ENCODE measurements at regions of chr5 and their contacts with region 1.

Region 1: DNA sequence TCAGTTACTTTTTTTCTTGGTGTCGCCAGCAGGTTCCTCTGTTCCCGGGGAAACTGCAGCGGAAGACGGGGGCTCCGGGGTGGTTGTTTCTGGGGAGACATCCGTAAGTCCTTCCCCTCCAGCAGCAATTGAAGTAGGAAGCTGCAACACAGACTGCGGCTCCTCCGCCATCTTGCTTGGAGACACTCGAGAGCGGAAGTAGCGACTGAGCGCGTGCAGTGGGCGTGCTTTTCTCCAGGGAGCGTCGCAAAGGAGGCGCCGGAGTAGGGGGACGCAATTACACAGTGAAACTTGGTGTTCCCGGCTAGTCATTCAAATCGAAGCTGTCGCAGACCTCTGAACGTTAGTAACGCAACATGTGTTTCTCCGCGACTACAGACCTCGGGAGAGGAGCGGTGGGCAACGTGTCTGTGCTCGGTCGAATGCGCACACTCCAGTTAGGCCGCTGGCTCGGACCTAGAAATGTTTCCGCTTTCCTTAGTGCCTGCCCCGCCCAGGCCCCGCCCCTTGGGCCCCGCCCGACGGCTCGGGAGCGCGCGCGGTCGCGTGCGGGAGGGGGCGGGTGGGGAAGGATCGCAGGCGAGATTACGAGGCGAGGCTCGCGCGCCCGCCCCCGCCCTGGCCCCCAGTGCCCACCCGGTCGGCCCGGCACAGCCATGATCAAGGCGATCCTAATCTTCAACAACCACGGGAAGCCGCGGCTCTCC is at the starts of genes AP3S1 and ATG12:
- DNase-seq: peak; percentile 95
- ATAC-seq: peak; percentile 97
- total RNA-seq, gene AP3S1: 61.9 TPM
- total RNA-seq, gene ATG12: 23.5 TPM

Region 2: DNA sequence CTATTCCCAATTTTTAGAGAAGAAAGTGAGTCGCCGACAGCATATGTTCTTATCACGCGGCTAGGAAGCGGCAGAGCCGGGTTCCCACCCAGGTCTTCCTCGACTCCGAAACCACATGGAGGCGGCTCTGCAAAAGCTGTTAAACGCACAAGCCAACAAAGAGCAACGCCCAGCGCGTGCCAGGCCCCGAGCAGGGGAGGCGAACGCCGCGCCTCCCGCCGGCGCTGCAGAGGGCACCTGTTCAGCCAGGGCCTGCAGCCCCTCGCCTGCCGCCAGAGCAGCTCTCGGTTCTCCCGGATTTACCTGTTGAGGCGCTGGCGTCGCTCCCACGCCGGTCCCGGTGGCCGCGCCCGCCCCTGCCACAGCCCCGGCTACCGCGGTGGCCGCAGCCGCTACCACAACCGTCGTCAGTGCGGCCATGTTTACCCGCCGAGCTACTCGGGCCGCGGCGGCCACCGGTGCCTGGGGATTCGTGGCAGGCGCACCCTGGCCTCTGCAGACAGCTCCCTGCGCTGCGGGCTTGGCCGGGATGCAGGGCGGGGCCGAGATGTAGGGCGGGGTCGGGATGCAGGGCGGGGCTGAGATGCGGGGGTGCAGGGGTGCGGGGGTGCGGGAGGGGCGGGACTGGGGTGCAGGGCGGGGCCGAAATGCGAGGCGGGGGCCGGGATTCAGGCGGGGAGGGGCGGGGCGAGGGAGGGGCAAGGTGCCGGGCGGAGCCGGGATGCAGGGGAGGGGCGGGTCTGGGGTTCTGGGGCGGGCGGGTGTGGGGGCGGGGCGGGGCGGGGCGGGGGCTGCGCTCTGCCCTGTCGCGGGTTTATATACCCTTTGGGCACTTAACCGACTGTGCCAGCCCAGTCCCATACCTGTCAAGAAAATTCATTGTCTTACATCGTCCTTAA is 545.2 kb before region 1 on chr5 and contains the start of gene CCDC112:
- intact Hi-C with region 1: loop called (anchors 10 kb)
- DNase-seq: peak; percentile 93
- ATAC-seq: peak; percentile 94
- total RNA-seq, gene CCDC112: 5.1 TPM

Region 3: GRCh38 chr5:115625579-115626444 is 215.7 kb before region 1 on chr5 and contains the start of gene TMED7:
- intact Hi-C with region 1: loop called (anchors 1 kb)
- DNase-seq: peak; percentile 100
- ATAC-seq: peak; percentile 99
- total RNA-seq, gene TMED7: 66.6 TPM

Region 4: GRCh38 chr5:115634343-115635132 is 207.0 kb before region 1 on chr5:
- intact Hi-C with region 1: loop called (anchors 2 kb)
- DNase-seq: peak; percentile 92
- ATAC-seq: peak; percentile 97

Region 5: DNA sequence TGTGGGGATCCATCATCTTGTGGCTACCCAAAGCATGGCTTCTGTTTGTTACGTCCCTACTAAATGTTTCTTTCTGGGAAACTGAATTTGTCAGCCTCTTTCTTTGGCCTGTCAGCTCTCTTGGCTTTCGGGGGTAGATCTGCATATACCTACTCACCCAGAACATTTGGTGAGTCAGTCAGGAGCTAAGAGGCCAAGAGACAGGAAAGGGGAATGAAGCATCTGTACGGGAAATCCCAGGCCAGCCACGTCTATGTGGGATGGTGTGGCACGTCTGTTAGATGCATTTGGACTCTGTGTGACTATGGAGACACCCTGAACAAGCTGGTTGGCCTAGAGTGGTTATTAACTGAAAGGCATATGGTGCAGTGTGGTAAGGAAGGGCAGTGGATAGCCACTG is 83.2 kb before region 1 on chr5:
- intact Hi-C with region 1: no loop called
- DNase-seq: no peak
- ATAC-seq: no peak

Region 6: DNA sequence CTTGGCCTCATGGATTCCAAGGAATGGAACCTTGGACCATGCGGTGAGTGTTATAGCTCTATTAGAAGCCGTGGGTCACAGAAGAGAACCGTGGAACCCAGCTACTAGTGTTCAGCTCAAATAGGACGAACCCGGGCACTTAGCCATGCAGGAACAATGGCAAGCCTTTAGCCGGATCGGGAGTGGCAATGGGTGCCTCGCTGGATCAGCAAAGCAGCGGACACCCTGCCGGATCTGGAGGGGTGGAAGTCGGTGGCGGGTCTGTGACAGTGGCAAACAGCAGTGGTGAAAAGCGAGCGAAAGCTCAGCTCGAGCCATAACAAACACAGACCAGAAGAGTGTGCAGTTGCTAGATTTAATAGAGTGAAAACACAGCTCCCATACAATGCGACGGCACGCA is 22.7 kb before region 1 on chr5:
- intact Hi-C with region 1: no loop called
- DNase-seq: no peak
- ATAC-seq: no peak

Region 7: DNA sequence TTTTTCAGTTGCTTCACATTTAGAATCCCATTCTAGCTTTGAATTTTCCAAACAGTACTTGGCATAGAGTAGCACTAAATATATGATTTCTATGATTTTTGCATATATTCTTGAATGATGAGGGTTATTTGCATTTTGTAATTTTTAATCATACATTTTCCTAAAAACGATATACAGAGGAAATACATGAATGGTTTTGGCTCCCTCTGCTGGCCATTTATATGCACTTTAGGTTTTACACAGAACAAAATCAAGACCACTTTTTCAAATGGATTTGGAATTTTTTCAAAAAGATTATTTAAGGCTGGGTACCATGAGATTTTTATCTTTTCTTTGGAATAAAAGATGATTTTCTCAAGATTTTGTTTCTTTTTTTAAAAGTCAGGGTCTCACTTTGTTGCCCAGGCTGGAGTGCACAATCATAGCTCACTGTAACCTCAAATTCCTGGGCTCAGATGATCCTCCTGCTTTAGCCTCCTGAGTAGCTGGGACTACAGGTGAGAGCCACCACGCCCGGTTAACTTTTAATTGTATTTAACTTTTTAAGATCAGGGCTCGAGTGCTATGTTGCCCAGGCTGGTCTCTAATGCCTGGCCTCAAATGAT is 226.6 kb after region 1 on chr5:
- intact Hi-C with region 1: loop called (anchors 5 kb)
- DNase-seq: no peak
- ATAC-seq: no peak

Measured in Right ventricle myocardium inferior (tissue), 1 donor.